ENCODE measurements at regions of chr11 and their contacts with region 1.

Region 1: DNA sequence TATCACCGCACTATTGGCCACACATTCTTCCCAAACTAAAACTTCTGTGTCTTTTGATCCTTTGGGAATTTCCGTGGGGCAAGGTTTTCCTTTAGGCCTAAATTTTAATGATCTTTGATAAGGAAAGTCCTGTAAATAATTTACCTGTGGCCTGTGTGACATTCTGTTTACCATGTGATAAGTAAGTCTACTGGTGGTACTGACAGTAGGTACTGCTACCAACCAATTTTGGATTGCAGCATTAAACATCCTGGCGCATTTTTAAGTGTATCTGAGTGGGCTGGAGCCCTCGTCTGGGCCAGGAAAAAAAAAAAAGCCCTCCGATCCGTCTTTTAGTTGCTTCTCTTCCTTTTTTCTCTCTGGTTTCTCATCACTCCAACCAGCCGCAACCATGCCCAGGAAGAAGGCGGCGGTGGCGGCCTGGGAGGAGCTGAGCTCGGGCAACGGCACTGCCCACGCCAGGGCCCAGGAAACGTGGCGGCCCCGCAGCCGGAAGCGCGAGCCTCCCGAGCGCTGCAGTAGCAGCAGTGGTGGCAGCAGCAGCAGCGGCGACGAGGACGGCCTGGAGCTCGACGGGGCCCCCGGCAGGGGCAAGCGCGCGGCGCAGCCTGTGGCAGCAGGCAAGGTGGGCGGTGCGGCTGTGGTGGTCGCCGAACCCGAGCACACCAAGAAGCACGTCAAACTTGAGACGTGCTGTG is 33.6 kb downstream of the ASRGL1 start:
- DNase-seq: peak in 31 of 35 experiments; percentile 8 to 66 (median 34)
- ATAC-seq: peak; percentile 92 to 97 (median 96)
- H3K4me3 ChIP-seq: no peak overlapping the region
- H3K4me3 Mint-ChIP-seq: peak overlapping the region; percentile 52 to 65 (median 61)
- H3K27ac ChIP-seq: peak overlapping the region; percentile 52
- H3K27ac Mint-ChIP-seq: peak overlapping the region; percentile 84 to 87
- H3K4me1 ChIP-seq: peaks cover 0 to 12% of the 10 kb centered on the region in 2 experiments
- H3K4me1 Mint-ChIP-seq: peaks cover 0 to 10% (median 4%) of the 10 kb centered on the region in 3 donors
- H3K27me3 ChIP-seq: no peaks in the 10 kb centered on the region
- H3K27me3 Mint-ChIP-seq: no peaks in the 10 kb centered on the region

Region 2: DNA sequence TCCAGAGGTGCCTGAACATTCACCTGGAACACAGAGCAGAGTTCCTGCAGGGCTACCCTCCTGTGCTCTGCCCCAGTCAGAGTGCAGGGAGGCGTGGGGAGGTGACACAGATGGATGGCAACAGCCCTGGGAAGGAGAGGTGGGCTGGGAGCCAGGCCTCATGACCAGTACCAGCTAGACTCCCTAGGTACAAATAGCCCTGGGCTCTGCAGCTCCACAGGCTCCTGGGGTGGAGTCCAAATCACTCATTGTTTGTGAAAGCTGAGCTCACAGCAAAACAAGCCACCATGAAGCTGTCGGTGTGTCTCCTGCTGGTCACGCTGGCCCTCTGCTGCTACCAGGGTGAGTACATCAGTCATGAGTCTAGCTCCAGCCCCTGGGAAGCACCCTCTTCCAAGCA is 128.9 kb before region 1 on chr11 and contains the start of gene SCGB1D2:
- CTCF ChIA-PET with region 1: no interaction called
- POLR2A ChIA-PET with region 1: no interaction called
- DNase-seq: no peak
- ATAC-seq: no peak
- H3K4me3 ChIP-seq: no peak within 1 kb of the TSS
- H3K4me3 Mint-ChIP-seq: no peak within 1 kb of the TSS
- H3K27ac ChIP-seq: no peak within 1 kb of the TSS
- H3K27ac Mint-ChIP-seq: no peak within 1 kb of the TSS
- H3K4me1 ChIP-seq: no peaks in the 10 kb centered on the region
- H3K4me1 Mint-ChIP-seq: no peaks in the 10 kb centered on the region
- H3K27me3 ChIP-seq: peaks cover 0 to 33% of the 10 kb centered on the region in 2 experiments
- H3K27me3 Mint-ChIP-seq: peaks cover 34 to 68% of the 10 kb centered on the region in 2 donors
- total RNA-seq, gene SCGB1D2: not detected

Region 3: DNA sequence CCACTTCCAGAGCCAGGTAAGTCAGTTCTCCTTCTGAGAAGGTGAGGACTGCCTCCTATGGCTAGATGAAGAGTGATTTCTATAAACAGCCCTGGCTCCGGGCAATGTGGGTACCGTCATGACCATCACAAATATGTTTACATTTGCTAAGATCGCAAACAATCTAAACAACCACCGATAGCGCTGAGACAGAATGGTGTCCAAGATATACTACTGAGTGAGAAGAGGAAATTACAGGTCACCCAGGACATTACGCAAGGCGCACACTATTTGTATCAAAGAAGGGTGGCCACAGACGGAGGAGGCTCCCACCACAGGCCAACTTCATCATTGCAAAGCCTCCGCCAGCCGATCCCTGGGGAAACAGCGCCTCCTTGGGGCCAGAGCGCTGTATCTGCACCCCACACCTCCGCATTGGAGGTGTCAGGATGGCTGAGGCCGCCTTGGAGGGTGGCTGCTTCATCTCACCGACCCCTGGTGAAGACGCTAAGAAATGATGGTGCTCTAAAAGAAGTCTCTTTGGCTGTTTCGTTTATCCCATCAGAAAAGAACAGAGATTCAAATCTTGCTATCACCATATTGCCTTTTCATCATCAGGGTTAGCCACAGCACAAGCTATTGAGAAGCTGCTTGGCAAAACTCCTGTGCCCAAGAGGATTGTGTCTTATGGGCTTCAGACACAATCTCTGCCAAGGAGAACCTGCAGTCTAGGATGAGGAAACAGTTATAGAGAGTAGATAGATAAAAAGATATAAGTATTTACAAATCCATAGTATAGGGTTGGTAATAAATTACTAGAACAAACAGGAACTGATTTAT is 45.9 kb before region 1 on chr11:
- CTCF ChIA-PET with region 1: no interaction called
- POLR2A ChIA-PET with region 1: no interaction called
- DNase-seq: peak in 30 of 35 experiments; percentile 23 to 64 (median 48)
- ATAC-seq: peak in 3 of 4 experiments; percentile 67 to 83 (median 70)
- H3K4me3 ChIP-seq: no peak overlapping the region
- H3K4me3 Mint-ChIP-seq: no peak overlapping the region
- H3K27ac ChIP-seq: no peak overlapping the region
- H3K27ac Mint-ChIP-seq: no peak overlapping the region
- H3K4me1 ChIP-seq: no peaks in the 10 kb centered on the region
- H3K4me1 Mint-ChIP-seq: no peaks in the 10 kb centered on the region
- H3K27me3 ChIP-seq: peaks cover 0 to 24% of the 10 kb centered on the region in 2 experiments
- H3K27me3 Mint-ChIP-seq: peaks cover 4 to 13% of the 10 kb centered on the region in 2 donors

Region 4: DNA sequence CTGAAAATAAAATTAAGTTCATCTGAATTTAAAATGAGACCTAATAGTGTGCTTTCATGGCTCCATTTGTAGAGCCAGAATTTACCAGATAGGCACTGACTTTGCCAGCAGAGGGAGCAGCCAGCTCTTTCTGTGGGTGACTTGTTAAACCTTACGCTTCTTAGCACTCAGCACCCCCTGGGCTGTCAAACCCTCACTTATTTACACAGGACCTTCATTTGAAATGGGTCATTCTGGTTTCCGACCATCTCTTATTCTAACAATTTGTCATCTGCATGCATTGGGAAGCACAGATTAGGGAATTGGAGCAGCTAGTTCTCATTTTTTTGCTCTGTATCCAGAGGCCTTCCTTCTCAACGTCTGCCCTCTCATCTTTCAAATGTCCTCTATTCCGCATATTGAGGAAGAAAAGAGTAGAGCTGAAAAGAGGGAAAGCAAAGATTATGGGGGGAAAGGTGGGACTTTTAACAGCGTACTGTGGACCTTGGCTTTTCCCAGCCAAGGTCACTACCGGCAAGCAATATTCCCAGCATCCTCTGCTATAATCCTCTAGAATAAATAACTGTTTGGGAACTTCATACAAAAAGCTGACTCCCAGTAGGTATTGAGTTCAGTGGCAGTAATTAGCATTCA is 30.5 kb before region 1 on chr11:
- CTCF ChIA-PET with region 1: interaction called, 3 to 18 read pairs
- POLR2A ChIA-PET with region 1: no interaction called
- DNase-seq: peak; percentile 13 to 75 (median 50)
- ATAC-seq: peak; percentile 41 to 47 (median 45)
- H3K4me3 ChIP-seq: no peak overlapping the region
- H3K4me3 Mint-ChIP-seq: peak overlapping the region in 1 of 3 donors; percentile 13
- H3K27ac ChIP-seq: no peak overlapping the region
- H3K27ac Mint-ChIP-seq: no peak overlapping the region
- H3K4me1 ChIP-seq: peaks cover 0 to 13% of the 10 kb centered on the region in 2 experiments
- H3K4me1 Mint-ChIP-seq: peaks cover 9 to 18% (median 9%) of the 10 kb centered on the region in 3 donors
- H3K27me3 ChIP-seq: peaks cover 0 to 11% of the 10 kb centered on the region in 2 experiments
- H3K27me3 Mint-ChIP-seq: peaks cover 0 to 21% of the 10 kb centered on the region in 2 donors

Region 5: DNA sequence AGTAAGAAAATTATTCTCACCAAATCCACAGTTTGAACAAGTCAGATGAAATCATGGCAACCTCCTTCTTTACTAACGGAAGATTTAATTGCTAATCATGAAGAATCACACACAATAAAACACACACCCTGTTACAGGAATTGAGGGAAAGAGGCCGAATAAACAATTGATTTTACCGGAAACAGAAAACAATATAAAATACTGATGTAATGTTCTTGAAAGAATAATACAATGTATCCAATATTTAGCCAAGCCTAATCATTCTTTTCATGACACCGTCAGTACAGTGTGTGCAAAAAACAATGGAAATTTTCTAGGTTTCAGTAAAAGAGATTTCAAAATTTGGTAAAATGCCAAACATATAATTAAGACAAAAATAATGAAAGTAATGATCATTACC is 10.2 kb before region 1 on chr11:
- CTCF ChIA-PET with region 1: no interaction called
- POLR2A ChIA-PET with region 1: interaction called in 1 of 2 experiments, 10 read pairs
- DNase-seq: no peak
- ATAC-seq: no peak
- H3K4me3 ChIP-seq: no peak overlapping the region
- H3K4me3 Mint-ChIP-seq: no peak overlapping the region
- H3K27ac ChIP-seq: no peak overlapping the region
- H3K27ac Mint-ChIP-seq: no peak overlapping the region
- H3K4me1 ChIP-seq: no peaks in the 10 kb centered on the region
- H3K4me1 Mint-ChIP-seq: no peaks in the 10 kb centered on the region
- H3K27me3 ChIP-seq: no peaks in the 10 kb centered on the region
- H3K27me3 Mint-ChIP-seq: no peaks in the 10 kb centered on the region

Region 6: DNA sequence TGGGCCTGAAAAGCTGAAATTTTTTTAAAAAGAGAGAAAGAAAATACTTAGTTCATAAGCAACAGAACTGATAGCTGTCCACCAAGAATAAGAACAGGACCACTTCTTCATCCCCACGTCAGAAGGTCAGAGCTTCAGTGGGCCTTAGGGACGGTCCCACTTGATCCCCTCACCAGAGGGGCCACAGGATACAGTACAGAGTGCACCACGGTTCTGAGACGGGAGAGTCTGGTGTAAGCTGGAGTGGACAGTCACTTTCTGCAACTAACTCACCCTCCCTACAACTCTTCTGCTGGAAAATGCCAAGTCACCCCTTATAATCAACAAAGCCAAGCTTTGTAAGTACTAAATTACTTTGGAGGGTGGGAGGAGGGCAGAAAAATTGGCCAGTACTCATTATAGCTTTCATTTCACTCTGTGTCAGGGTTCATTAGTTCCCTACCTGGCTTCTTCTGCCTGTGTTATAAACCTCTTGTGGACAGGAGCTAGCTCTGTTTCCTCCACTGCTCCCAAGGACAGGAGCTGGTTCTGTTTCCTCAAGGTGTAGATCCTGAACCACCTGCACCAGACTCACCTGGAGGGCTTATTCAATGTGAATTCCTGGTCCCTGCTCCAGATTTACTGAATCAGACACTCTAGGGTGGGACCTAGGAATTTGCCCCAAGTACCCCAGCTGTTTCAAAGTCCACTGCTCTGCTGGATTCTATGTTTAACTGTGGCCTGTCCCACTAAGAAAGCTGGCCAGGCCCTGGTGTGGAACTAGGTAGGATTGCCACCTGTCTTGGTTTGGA is 87.5 kb after region 1 on chr11:
- CTCF ChIA-PET with region 1: no interaction called
- POLR2A ChIA-PET with region 1: no interaction called
- DNase-seq: no peak
- ATAC-seq: no peak
- H3K4me3 ChIP-seq: no peak overlapping the region
- H3K4me3 Mint-ChIP-seq: no peak overlapping the region
- H3K27ac ChIP-seq: no peak overlapping the region
- H3K27ac Mint-ChIP-seq: no peak overlapping the region
- H3K4me1 ChIP-seq: peaks cover 0 to 3% of the 10 kb centered on the region in 2 experiments
- H3K4me1 Mint-ChIP-seq: peaks cover 0 to 4% (median 0%) of the 10 kb centered on the region in 3 donors
- H3K27me3 ChIP-seq: no peaks in the 10 kb centered on the region
- H3K27me3 Mint-ChIP-seq: no peaks in the 10 kb centered on the region